Gastrocnemius medialis (tissue), 4 donors: ENCODE measurements at regions of chr3 and their contacts with region 1.

Region 1: DNA sequence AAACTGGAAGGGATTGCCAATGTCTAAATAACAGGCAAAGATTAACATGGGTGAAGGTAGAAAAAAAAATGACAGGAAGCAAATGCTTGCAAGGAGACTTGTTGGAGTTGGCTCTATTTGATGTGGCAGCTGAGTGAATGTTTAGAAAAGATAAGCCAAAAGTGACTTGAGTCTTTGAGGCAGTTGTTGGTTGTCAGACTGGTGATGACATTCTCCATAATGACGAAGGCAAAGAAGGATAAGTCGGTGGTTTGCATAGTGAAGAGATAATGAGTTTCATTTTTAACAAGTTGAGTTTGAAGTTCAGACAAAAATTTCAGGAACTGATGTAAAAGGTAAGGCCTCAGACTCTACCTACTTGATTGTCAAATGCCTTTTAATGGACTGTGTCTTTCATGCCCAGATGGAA is 704.1 kb upstream of the SGO1 start:
- DNase-seq: no peak
- ATAC-seq: no peak
- H3K4me3 ChIP-seq: no peak overlapping the region
- H3K27ac ChIP-seq: no peak overlapping the region
- H3K4me1 ChIP-seq: no peaks in the 10 kb centered on the region
- H3K27me3 ChIP-seq: no peaks in the 10 kb centered on the region
- CTCF ChIP-seq: no peak
- POLR2A ChIP-seq: no peak

Region 2: GRCh38 chr3:20776692-20777091 is 113.4 kb before region 1 on chr3:
- in situ Hi-C with region 1: no loop called
- intact Hi-C with region 1: no loop called
- DNase-seq: no peak
- ATAC-seq: no peak
- H3K4me3 ChIP-seq: no peak overlapping the region
- H3K27ac ChIP-seq: no peak overlapping the region
- H3K4me1 ChIP-seq: no peaks in the 10 kb centered on the region
- H3K27me3 ChIP-seq: no peaks in the 10 kb centered on the region
- CTCF ChIP-seq: no peak
- POLR2A ChIP-seq: no peak

Region 3: GRCh38 chr3:20905210-20905805 is 15.2 kb after region 1 on chr3:
- in situ Hi-C with region 1: no loop called
- intact Hi-C with region 1: loop called (anchors 1 kb)
- DNase-seq: no peak
- ATAC-seq: no peak
- H3K4me3 ChIP-seq: no peak overlapping the region
- H3K27ac ChIP-seq: no peak overlapping the region
- H3K4me1 ChIP-seq: no peaks in the 10 kb centered on the region
- H3K27me3 ChIP-seq: no peaks in the 10 kb centered on the region
- CTCF ChIP-seq: no peak
- POLR2A ChIP-seq: no peak